ENCODE measurements at regions of chr5 and their contacts with region 1.

Region 1: DNA sequence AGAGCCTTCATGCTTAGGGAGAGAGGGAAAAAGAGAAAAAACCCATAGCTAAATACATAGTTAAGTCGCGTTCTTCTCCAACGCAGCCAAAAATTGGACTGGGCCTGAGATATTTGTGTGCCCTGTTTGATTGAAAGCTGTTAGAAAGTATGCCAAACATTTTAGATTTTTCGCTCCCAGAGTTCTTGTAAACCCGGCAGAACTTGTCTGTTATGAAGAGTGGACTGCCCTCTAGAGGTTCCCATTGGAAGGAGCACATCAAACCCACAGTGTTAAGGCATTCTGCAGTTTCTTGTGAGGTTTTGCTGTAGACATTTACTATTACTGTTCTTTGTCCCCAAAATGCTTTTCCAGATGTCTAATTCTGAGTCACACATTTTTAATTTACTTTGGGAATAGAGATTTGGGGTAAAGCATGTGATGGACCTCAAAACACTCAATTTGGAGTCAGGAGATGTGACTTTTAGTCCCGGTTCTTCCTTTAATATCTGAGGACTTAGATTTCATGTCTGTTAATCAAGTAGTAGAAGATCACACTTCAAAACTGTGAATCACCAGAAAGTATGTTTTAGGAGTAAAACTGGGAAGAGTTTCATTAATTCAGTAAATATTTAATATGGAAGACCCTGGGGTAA is 96.6 kb downstream of the PCSK1 start:
- DNase-seq: peak; percentile 89
- H3K4me3 Mint-ChIP-seq: no peak overlapping the region
- H3K27ac Mint-ChIP-seq: no peak overlapping the region
- H3K4me1 Mint-ChIP-seq: peaks cover 21% of the 10 kb centered on the region
- H3K27me3 Mint-ChIP-seq: no peaks in the 10 kb centered on the region
- CTCF ChIP-seq: peak; percentile 84

Region 2: GRCh38 chr5:95858661-95859326 is 477.7 kb before region 1 on chr5:
- CTCF ChIA-PET with region 1: interaction called, 57 read pairs
- POLR2A ChIA-PET with region 1: interaction called, 82 read pairs
- intact Hi-C with region 1: loop called (anchors 1 kb)
- DNase-seq: peak; percentile 96
- H3K4me3 Mint-ChIP-seq: peak overlapping the region; percentile 67
- H3K27ac Mint-ChIP-seq: peak overlapping the region; percentile 99
- H3K4me1 Mint-ChIP-seq: peaks cover 57% of the 10 kb centered on the region
- H3K27me3 Mint-ChIP-seq: no peaks in the 10 kb centered on the region
- CTCF ChIP-seq: peak; percentile 93

Region 3: DNA sequence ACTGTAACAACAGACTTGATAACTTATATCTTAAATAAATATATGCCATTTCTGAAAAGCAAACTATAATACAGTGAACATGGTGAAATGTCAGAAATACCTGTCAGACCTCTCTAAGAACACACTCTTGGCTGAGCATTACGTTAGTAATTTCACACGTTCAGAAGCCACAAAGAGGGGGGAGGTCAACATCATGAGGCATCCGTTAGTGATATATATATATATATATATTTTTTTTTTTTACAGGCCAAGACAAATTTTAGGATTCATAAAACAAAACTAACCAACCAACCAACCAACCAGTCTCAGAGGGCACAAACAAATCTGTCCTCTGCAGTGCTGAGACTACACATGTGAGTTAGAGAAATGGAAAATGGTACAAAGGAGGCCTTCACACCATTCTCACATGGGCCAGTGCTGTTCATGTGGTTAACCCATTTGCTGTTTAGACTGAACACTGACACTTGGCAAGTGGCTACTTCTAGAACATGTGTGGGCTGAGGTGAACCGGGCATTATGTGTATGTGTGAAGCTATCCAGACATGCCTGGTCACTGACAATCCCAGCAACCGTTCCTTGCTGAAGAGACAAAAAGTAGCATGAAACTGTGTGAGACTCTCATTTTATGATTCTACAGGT is 429.3 kb before region 1 on chr5:
- CTCF ChIA-PET with region 1: interaction called, 11 read pairs
- POLR2A ChIA-PET with region 1: no interaction called
- intact Hi-C with region 1: no loop called
- DNase-seq: no peak
- H3K4me3 Mint-ChIP-seq: no peak overlapping the region
- H3K27ac Mint-ChIP-seq: no peak overlapping the region
- H3K4me1 Mint-ChIP-seq: peaks cover 17% of the 10 kb centered on the region
- H3K27me3 Mint-ChIP-seq: no peaks in the 10 kb centered on the region
- CTCF ChIP-seq: no peak

Region 4: GRCh38 chr5:96093890-96094381 is 242.5 kb before region 1 on chr5:
- CTCF ChIA-PET with region 1: interaction called, 14 read pairs
- POLR2A ChIA-PET with region 1: interaction called, 5 read pairs
- intact Hi-C with region 1: loop called (anchors 5 kb)
- DNase-seq: peak; percentile 90
- H3K4me3 Mint-ChIP-seq: no peak overlapping the region
- H3K27ac Mint-ChIP-seq: peak overlapping the region; percentile 1
- H3K4me1 Mint-ChIP-seq: peaks cover 28% of the 10 kb centered on the region
- H3K27me3 Mint-ChIP-seq: no peaks in the 10 kb centered on the region
- CTCF ChIP-seq: no peak

Region 5: DNA sequence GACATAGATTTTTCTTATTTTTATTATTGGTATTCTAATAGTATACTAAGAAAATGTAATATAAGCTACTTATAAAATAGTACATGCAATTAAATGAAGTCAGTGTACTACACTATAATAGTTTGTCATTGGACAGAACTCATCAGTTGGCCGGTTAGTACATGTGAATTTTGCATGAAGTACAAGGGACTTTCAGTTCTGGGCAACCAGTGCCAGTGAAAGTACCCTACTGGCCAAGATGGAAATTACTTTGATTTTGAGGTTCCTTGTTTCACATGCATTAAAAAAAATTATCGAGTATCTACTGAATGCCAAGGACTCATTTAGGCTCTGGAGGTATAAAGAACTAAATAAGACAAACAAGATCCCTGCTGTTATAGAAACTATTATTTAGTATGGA is 161.4 kb before region 1 on chr5:
- CTCF ChIA-PET with region 1: no interaction called
- POLR2A ChIA-PET with region 1: interaction called, 5 read pairs
- intact Hi-C with region 1: loop called (anchors 1 kb)
- DNase-seq: peak; percentile 43
- H3K4me3 Mint-ChIP-seq: no peak overlapping the region
- H3K27ac Mint-ChIP-seq: no peak overlapping the region
- H3K4me1 Mint-ChIP-seq: peaks cover 28% of the 10 kb centered on the region
- H3K27me3 Mint-ChIP-seq: no peaks in the 10 kb centered on the region
- CTCF ChIP-seq: peak; percentile 22

Region 6: GRCh38 chr5:96256778-96257470 is 79.5 kb before region 1 on chr5:
- CTCF ChIA-PET with region 1: interaction called, 8 read pairs
- POLR2A ChIA-PET with region 1: interaction called, 4 read pairs
- intact Hi-C with region 1: loop called (anchors 5 kb)
- DNase-seq: peak; percentile 76
- H3K4me3 Mint-ChIP-seq: no peak overlapping the region
- H3K27ac Mint-ChIP-seq: no peak overlapping the region
- H3K4me1 Mint-ChIP-seq: peaks cover 51% of the 10 kb centered on the region
- H3K27me3 Mint-ChIP-seq: no peaks in the 10 kb centered on the region
- CTCF ChIP-seq: no peak

Measured in MCF 10A (cell line).